ENCODE measurements at regions of chr7 and their contacts with region 1.

Region 1: DNA sequence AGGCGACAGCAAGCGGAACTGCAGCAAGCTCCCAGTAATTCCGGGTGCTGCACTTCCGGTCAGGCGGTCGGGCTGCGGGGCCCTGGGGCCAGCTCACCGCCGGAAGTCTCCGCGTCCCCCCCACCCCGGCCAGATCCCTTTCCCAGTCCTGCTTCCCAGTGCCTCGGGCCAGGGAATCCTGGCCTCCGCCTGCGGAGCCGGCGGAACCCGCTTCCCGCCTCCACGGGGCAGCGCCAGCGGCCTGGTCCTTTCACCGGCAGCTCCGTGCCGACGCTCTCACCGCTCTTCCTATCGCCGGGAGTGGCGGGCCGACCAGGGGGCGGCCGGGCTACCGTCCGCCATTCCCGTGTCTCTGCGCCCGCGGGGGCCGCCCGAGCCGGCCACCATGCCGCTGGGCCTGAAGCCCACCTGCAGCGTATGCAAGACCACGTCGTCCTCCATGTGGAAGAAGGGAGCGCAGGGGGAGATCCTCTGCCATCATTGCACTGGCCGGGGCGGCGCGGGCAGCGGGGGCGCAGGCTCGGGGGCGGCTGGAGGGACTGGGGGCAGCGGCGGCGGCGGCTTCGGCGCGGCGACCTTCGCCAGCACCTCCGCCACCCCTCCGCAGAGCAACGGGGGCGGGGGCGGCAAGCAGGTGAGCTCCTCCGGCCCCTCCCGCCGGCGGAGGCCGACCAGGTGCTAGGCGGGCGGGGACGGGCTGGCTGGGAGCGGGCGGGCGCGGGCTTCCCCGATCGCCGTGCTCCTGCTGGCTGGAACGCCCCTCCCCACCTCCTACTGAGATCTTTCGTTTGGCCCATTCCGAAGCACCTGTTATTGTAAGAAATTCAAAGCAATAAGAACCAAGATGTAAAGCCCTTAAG is at the start of gene GATAD1:
- DNase-seq: peak; percentile 81 to 92
- H3K4me3 ChIP-seq: peak within 1 kb of the TSS; percentile 60
- H3K27ac ChIP-seq: peak within 1 kb of the TSS; percentile 55
- H3K4me1 ChIP-seq: peaks cover 9% of the 10 kb centered on the region
- H3K27me3 ChIP-seq: no peaks in the 10 kb centered on the region
- CTCF ChIP-seq: peak; percentile 86; the same call in 1 of the 2 replicates
- total RNA-seq, gene GATAD1: 39.4 and 41.7 TPM in 2 replicates

Region 2: GRCh38 chr7:91835846-91836368 is 611.7 kb before region 1 on chr7:
- CTCF ChIA-PET with region 1: no interaction called
- POLR2A ChIA-PET with region 1: no interaction called
- intact Hi-C with region 1: loop called (anchors 5 kb)
- DNase-seq: no peak
- H3K4me3 ChIP-seq: no peak overlapping the region
- H3K27ac ChIP-seq: no peak overlapping the region
- H3K4me1 ChIP-seq: no peaks in the 10 kb centered on the region; the same call in 1 of the 2 replicates
- H3K27me3 ChIP-seq: no peaks in the 10 kb centered on the region
- CTCF ChIP-seq: no peak

Region 3: DNA sequence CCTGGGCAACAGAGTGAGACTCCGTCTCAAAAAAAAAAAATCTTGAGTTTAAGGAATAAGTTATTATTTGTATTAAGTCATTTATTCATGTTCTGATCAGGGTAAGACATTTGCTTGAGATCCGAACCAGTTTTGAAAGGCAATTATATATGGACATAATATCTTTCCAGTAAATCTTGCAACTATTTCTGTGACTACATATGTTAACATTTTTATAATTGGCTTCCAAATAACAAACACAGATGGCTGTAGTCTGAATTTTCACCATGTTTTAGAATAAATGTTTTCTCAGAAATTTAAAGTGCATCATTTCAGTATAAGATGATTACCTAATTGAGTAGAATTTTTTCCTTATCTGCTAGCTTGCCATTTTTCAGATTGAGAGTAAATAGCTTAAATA is 485.8 kb before region 1 on chr7:
- CTCF ChIA-PET with region 1: no interaction called
- POLR2A ChIA-PET with region 1: no interaction called
- intact Hi-C with region 1: no loop called
- DNase-seq: no peak
- H3K4me3 ChIP-seq: no peak overlapping the region
- H3K27ac ChIP-seq: no peak overlapping the region
- H3K4me1 ChIP-seq: no peaks in the 10 kb centered on the region
- H3K27me3 ChIP-seq: no peaks in the 10 kb centered on the region
- CTCF ChIP-seq: no peak

Region 4: DNA sequence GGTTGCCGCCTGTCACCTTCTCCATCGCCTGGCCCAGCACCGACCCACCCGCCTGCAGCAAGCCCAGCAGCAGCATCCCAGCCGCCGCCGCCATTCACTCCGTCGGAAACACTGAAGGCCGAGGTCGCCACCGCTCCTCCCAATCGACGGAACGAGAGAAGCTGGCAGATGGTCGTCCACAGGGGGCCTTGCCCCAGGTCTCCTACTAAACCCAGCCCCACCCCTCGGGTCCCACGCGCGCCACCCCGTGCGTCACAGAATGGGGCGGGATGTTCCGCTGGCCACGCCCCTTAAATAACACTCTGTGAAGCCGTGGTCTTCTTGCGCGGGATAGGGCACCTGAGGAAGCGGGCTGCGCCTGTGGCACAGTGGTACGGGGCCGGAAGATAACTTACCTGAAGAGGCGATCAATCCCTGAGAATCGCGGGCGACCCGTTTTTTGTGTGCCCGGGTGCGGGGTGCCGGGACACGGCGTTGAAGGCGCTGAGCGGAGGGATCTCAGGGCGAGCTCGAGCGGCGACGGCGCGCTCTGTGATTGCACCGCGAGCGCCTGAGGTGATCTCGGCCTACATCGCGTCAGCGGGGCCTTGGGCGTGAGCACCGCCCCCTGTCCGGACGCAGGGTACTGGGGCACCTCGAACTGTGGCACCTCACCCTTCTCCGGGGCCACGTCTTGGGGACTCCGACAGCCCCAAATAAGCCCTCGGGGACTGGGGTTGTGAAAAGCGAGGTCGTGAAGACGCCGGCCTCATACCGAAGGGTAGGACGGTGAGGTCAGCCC is 313.1 kb before region 1 on chr7 and contains the start of gene CYP51A1:
- CTCF ChIA-PET with region 1: no interaction called
- POLR2A ChIA-PET with region 1: no interaction called
- intact Hi-C with region 1: loop called (anchors 1 kb)
- DNase-seq: peak; percentile 80 to 95
- H3K4me3 ChIP-seq: peak within 1 kb of the TSS; percentile 65
- H3K27ac ChIP-seq: peak within 1 kb of the TSS; percentile 73
- H3K4me1 ChIP-seq: peaks cover 20% of the 10 kb centered on the region
- H3K27me3 ChIP-seq: no peaks in the 10 kb centered on the region
- CTCF ChIP-seq: no peak
- total RNA-seq, gene CYP51A1: 58.9 and 89.0 TPM in 2 replicates

Region 5: GRCh38 chr7:92421676-92422435 is 25.7 kb before region 1 on chr7:
- CTCF ChIA-PET with region 1: interaction called, 18 read pairs
- POLR2A ChIA-PET with region 1: interaction called, 9 read pairs
- intact Hi-C with region 1: loop called (anchors 1 kb)
- DNase-seq: no peak
- H3K4me3 ChIP-seq: no peak overlapping the region
- H3K27ac ChIP-seq: no peak overlapping the region
- H3K4me1 ChIP-seq: 0 out of 2 replicates have a peak, but pooled peaks cover 5% of the 10 kb centered on the region
- H3K27me3 ChIP-seq: no peaks in the 10 kb centered on the region
- CTCF ChIP-seq: no peak

Region 6: GRCh38 chr7:92872701-92873100 is 425.1 kb after region 1 on chr7:
- CTCF ChIA-PET with region 1: no interaction called
- POLR2A ChIA-PET with region 1: no interaction called
- intact Hi-C with region 1: no loop called
- DNase-seq: no peak
- H3K4me3 ChIP-seq: no peak overlapping the region
- H3K27ac ChIP-seq: no peak overlapping the region
- H3K4me1 ChIP-seq: no peaks in the 10 kb centered on the region
- H3K27me3 ChIP-seq: no peaks in the 10 kb centered on the region
- CTCF ChIP-seq: no peak

Region 7: DNA sequence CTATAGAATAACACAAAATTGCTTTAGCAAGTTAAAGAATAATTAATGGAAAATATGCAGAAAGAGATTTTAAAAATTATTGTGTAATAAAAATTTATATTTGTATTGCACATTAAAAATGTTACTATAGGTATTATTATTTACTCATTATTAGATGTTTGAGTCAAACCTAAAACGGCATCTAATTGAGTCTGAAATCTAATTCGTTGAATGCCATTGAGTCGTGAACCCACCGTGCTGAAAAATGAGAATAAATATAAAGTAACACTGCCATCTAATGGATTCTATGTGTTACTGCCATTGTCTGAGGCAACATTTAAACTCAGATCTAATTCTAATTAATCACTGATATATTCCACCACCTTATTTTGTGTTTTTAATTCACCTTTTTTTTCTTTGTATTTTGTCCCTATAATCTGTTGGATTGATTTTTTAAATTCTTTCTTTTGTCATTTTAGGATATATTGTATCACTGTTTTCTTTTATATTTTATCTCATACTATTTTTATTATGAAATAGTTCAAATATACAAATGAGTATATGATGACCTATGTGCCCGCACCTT is 608.0 kb after region 1 on chr7:
- CTCF ChIA-PET with region 1: no interaction called
- POLR2A ChIA-PET with region 1: no interaction called
- intact Hi-C with region 1: loop called (anchors 5 kb)
- DNase-seq: peak in 1 of 2 experiments; percentile 50
- H3K4me3 ChIP-seq: no peak overlapping the region
- H3K27ac ChIP-seq: no peak overlapping the region
- H3K4me1 ChIP-seq: no peaks in the 10 kb centered on the region
- H3K27me3 ChIP-seq: no peaks in the 10 kb centered on the region
- CTCF ChIP-seq: peak; percentile 87